AG04449 (cell line): ENCODE measurements at regions of chr3 and their contacts with region 1.

Region 1: DNA sequence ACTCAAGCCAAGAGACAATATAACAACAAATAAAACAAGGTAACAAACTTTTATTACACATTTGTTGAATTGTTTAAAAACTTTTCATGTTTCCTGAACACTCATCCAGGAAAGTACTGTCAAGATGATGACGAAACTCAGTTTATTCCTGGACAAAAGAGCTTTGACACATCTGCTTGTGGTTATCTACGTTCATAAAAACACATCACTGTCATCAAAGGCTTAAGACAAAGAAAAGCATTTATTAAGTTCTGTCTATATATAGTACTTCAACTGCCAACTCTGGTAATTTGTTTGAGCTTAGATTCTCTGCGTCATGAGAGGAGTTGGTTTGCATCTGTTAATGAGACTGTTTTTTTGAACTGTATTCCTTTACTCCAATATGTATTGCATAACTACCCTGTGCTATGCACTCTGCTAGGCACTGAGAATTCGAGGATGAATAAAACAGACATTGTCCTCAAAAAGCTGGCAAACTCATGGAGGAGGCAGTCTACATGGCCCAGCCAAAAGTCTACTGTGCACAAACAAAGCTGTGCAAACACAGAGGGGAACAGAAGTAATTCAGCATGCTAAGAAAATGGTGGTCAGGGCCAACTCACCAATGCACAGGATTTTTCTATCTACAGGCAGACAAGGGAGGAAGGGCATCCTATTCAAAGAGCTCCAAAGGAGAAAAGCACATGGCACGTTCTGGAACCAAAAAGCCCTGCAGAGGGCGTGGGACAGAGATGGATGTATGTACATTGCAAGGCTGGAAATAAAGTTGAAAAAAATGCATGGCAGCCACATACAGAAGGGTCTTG is 21.5 kb downstream of the PLD1 start:
- DNase-seq: peak; percentile 76
- H3K4me3 ChIP-seq: no peak overlapping the region
- CTCF ChIP-seq: no peak

Region 2: GRCh38 chr3:171636666-171637065 is 152.1 kb before region 1 on chr3:
- CTCF ChIA-PET with region 1: no interaction called
- POLR2A ChIA-PET with region 1: no interaction called
- DNase-seq: no peak
- H3K4me3 ChIP-seq: no peak overlapping the region
- CTCF ChIP-seq: no peak

Region 3: DNA sequence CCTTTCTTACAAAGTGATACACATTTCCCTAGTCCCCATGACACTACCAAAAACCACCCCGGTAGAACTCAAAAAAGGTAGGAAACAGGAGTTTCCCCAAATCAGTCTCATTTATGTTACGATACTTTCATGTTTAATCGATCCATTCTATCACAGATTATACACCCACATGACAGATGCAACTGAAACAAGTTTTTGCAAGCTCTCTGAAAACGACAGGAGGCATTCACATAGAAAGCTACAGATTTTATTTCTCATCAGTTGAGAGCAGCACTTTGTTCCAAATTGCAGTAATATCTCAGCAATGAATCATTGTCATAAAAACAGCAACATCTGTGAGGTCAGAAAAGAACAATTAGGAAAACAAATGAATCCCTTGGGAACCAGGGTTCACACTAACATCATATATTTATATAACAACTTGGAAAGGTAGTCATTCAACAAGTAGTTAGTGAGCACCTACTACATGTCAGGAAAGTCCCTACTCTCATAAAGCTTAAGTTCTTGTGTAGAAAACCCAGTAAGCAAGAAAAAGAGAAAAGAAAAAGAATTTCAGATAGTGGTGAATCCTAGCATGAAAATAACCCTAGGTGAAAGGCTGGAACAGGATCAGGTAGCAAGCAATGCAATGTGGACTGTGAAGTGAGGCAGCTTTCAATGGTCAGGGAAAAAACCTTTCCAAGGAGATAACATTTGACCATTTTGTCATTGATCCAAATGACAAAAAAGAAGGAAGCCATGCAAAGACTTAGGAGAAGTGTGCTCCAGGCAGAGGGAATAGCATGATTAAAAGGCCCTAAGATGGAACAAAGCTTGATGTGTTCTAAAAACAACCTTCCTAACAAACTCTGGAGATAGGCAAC is 13.2 kb after region 1 on chr3:
- CTCF ChIA-PET with region 1: interaction called, 10 read pairs
- POLR2A ChIA-PET with region 1: interaction called, 5 read pairs
- DNase-seq: peak; percentile 76
- H3K4me3 ChIP-seq: no peak overlapping the region
- CTCF ChIP-seq: no peak